Posterior vena cava (tissue), 2 donors: ENCODE measurements at regions of chr18 and their contacts with region 1.

Region 1: DNA sequence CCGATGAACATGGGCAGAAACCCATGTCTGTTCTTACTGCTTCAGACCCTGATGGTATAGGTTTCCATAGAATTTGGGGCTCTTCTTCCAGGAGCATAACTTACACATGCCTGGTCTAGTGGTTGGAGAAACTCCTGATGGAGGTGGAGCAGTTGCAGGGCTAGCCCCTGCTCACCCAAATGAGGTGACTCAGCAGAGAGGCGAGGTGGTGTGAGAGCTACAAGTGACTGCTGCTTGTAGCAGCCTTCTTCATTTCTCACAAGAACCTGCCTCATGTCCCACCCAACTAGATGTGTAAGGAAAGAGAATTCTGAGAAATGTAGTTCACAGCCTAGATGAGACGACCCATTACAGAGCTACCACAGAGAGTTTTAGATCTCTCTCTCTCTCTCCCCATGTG is 105.3 kb downstream of the ZNF407 start:
- DNase-seq: no peak

Region 2: DNA sequence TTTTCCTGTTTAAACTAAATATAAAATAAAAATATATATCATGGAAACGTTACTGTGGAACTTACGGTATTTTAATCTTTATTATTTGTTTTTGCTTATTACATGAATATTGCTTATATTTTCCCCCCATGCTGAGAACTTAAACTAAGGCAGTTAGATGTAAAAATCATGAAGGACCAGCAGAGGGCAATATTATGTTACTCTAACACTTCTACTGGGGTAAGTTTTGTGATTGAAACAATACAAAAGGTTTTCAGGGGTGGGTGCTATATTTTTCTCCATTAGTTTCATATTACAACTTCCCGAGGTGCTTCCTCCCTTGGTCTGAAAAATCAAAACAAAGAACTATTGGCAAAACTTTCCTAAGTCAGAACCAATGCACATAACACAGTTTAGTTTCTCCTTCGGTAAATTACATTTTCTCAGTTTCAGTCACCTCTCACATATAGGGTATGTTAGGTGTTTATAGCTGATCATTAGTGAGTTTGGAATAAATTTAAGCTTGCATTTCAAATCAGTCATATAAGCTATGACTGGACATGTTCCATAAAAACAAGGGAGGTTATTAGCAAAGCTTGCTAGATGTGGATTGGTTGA is 50.5 kb before region 1 on chr18:
- intact Hi-C with region 1: loop called in 1 of 2 experiments (anchors 2 kb)
- DNase-seq: no peak

Region 3: GRCh38 chr18:75408554-75409506 is 705.9 kb after region 1 on chr18:
- intact Hi-C with region 1: no loop called
- DNase-seq: no peak